Left ventricle myocardium superior (tissue), 1 donor: ENCODE measurements at regions of chr2 and their contacts with region 1.

Region 1: DNA sequence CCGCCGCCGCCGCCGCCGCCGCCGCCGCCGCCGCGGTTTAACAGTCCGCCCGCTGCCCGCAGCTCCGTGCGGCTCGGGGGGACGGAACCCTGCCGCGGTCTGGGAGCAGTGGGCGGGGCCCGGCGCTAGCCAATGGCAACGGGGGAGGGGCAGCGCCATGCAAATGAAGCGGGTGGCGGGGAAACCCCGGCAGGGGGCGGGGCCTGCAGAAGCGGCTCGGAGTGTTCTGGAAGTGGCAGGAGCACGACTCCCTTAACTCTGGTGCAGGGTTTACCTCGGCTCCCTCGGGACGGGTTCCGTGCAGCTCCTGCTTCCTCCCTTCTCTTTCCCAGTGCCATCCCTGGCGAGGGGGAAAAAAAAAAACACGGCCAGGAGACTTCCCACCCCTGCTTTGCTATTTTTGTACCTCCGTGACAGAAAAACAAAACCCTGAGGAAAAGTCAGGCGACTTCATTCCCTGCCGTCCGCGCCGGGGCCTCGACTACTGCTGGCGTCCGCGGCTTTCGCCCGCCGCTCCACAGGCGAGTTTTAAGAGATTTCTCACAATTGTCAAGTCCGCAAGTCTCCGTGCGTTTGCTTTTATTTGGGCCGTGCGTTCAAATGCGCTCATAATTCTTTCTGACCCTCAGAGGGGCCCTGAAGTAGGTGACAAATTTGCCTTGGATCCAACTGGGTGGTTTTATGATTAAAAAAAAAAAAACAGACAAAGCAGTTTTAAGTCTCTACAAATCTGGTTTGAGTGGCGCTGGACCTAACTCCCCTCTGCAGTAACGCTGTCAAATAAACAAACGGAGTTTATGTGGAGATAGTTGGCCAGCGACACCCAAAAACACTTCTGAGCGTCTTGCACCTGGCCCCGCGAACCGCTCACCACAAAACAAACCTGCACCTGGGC is at the start of gene KANSL1L:
- DNase-seq: peak; percentile 100
- ATAC-seq: peak; percentile 94
- total RNA-seq, gene KANSL1L: 17.4 TPM

Region 2: GRCh38 chr2:210002158-210003157 is 169.1 kb before region 1 on chr2 and contains the start of gene RPE:
- intact Hi-C with region 1: loop called (anchors 10 kb)
- DNase-seq: peak; percentile 99
- ATAC-seq: peak; percentile 100
- total RNA-seq, gene RPE: 16.6 TPM

Region 3: DNA sequence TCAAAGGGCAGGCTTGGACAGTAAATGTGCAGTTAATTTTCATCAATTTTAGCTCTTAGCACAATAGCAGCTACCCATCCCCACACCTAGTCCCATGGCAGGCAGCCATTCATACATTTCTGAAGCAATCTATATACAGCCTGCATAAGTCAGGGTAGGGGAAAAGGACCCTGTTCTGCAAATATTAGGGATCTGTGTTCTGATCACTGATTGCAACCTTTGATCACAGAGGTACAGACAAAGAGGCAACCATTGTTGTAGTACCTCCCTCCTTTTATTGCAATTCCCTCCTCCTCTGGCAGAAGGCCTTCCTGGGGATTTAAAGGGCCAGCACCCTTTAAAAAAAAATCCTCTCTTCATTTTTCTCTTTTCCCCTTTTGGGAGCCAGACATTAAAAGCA is 58.7 kb before region 1 on chr2:
- intact Hi-C with region 1: no loop called
- DNase-seq: no peak
- ATAC-seq: no peak